Testis (tissue), 5 donors: ENCODE measurements at regions of chr17 and their contacts with region 1.

Region 1: GRCh38 chr17:64025732-64026294 is 5.4 kb upstream of the ICAM2 start:
- DNase-seq: peak; percentile 81
- H3K4me3 ChIP-seq: no peak overlapping the region
- H3K27ac ChIP-seq: no peak overlapping the region
- H3K4me1 ChIP-seq: no peaks in the 10 kb centered on the region
- H3K27me3 ChIP-seq: no peaks in the 10 kb centered on the region
- CTCF ChIP-seq: peak; percentile 69 to 98 (median 90)
- POLR2A ChIP-seq: no peak

Region 2: GRCh38 chr17:63919311-63919723 is 106.5 kb before region 1 on chr17:
- intact Hi-C with region 1: loop called (anchors 10 kb)
- DNase-seq: peak; percentile 64
- H3K4me3 ChIP-seq: no peak overlapping the region
- H3K27ac ChIP-seq: no peak overlapping the region
- H3K4me1 ChIP-seq: no peaks in the 10 kb centered on the region
- H3K27me3 ChIP-seq: no peaks in the 10 kb centered on the region
- CTCF ChIP-seq: peak; percentile 85 to 97 (median 87)
- POLR2A ChIP-seq: no peak

Region 3: GRCh38 chr17:64129764-64130558 is 104.1 kb after region 1 on chr17 and contains the start of gene ERN1:
- intact Hi-C with region 1: loop called (anchors 5 kb)
- DNase-seq: peak; percentile 95
- H3K4me3 ChIP-seq: peak within 1 kb of the TSS; percentile 83 to 95
- H3K27ac ChIP-seq: peak within 1 kb of the TSS; percentile 90 to 94
- H3K4me1 ChIP-seq: peaks cover 11% of the 10 kb centered on the region
- H3K27me3 ChIP-seq: no peaks in the 10 kb centered on the region
- CTCF ChIP-seq: no peak
- POLR2A ChIP-seq: peak; percentile 49
- total RNA-seq, gene ERN1: 12.8 to 13.0 TPM